Vagina (tissue), 2 donors: ENCODE measurements at regions of chr13 and their contacts with region 1.

Region 1: GRCh38 chr13:78121459-78122348 is 203.1 kb upstream of the EDNRB start:
- DNase-seq: no peak
- H3K4me3 ChIP-seq: no peak overlapping the region
- H3K27ac ChIP-seq: no peak overlapping the region
- H3K4me1 ChIP-seq: no peaks in the 10 kb centered on the region
- H3K27me3 ChIP-seq: no peaks in the 10 kb centered on the region
- CTCF ChIP-seq: peak; percentile 53 to 86 (median 84)
- POLR2A ChIP-seq: no peak

Region 2: GRCh38 chr13:77779552-77780272 is 342.0 kb before region 1 on chr13:
- intact Hi-C with region 1: loop called (anchors 5 kb)
- DNase-seq: no peak
- H3K4me3 ChIP-seq: no peak overlapping the region
- H3K27ac ChIP-seq: no peak overlapping the region
- H3K4me1 ChIP-seq: no peaks in the 10 kb centered on the region
- H3K27me3 ChIP-seq: no peaks in the 10 kb centered on the region
- CTCF ChIP-seq: peak in 2 of 3 experiments; percentile 11 to 78
- POLR2A ChIP-seq: no peak

Region 3: GRCh38 chr13:78398743-78399410 is 277.2 kb after region 1 on chr13:
- intact Hi-C with region 1: no loop called
- DNase-seq: no peak
- H3K4me3 ChIP-seq: no peak overlapping the region
- H3K27ac ChIP-seq: no peak overlapping the region
- H3K4me1 ChIP-seq: no peaks in the 10 kb centered on the region
- H3K27me3 ChIP-seq: no peaks in the 10 kb centered on the region
- CTCF ChIP-seq: no peak
- POLR2A ChIP-seq: no peak